ENCODE measurements at regions of chr17 and their contacts with region 1.

Region 1: DNA sequence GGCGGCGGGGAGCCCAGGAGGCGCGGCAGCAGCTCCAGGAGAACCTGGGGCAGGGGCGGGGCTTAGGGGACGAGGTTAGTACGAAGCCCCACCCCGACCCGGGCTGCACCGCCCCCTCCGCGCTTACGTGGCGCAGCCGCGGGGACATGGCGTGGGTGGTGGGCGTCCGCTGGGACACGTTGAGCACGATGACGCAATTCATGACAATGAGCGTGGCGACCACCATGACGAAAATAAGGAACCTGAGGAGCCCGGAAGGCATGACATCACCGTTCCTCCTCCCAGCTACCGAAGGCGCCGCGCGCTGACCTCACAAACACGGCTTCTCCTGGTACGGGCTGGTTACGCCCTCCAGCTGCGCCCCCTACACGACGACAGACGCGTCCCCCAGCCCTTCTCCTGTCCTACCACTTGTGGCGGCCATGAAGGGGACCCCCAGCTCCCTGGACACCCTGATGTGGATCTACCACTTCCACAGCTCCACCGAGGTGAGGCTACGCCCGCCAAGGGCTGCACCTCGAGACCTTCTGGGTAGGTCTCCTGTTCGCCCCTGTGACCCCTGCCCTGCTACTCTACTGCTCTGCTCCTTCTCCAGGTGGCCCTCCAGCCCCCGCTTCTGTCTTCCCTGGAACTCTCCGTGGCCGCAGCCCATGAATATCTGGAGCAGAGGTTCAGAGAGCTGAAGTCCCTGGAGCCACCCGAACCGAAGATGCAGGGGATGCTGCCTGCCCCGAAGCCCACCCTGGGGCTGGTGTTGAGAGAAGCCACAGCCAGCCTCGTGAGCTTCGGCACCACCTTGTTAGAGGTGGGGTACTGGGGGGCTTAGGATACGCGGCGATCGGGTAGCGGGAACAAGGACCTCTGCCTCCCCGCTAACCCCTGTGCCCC is at the start of gene C17orf107:
- DNase-seq: peak; percentile 89 to 94 (median 93)
- ATAC-seq: peak; percentile 57 to 60
- H3K4me3 ChIP-seq: peak within 1 kb of the TSS; percentile 32
- H3K27ac ChIP-seq: no peak within 1 kb of the TSS
- H3K4me1 ChIP-seq: no peaks in the 10 kb centered on the region
- H3K27me3 ChIP-seq: no peaks in the 10 kb centered on the region
- total RNA-seq, gene C17orf107: 2.7 to 3.3 (median 2.8) TPM

Region 2: GRCh38 chr17:4739122-4740024 is 160.2 kb before region 1 on chr17 and contains the starts of genes CXCL16 and ZMYND15:
- intact Hi-C with region 1: loop called in 1 of 4 experiments (anchors 10 kb)
- DNase-seq: peak; percentile 50 to 87 (median 84)
- ATAC-seq: peak; percentile 61 to 68
- H3K4me3 ChIP-seq: peak within 1 kb of the TSS; percentile 86
- H3K27ac ChIP-seq: no peak within 1 kb of the TSS
- H3K4me1 ChIP-seq: peaks cover 4% of the 10 kb centered on the region
- H3K27me3 ChIP-seq: no peaks in the 10 kb centered on the region
- total RNA-seq, gene CXCL16: 5.0 to 6.3 (median 5.5) TPM
- total RNA-seq, gene ZMYND15: 0.20 to 0.53 (median 0.33) TPM